ENCODE measurements at regions of chr15 and their contacts with region 1.

Region 1: DNA sequence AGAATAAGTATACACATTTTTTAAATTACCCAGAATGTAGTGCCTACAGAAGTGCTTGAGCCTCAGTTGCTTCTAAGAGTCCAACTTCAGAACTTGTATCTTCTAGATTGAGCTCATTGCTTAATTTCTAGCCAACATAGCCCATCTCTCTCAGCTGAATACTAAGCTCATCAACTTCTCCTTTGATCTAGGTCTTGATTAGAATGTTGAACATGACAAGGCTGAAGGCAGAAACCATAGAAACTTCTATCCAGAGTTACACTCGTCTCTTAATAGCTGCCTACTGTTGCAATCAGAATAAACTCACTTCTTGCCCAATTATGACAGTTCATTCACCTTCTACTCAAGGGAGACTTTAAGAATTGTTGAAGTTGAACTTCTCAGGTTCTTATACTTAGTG is 327.3 kb upstream of the THBS1 start:
- DNase-seq: no peak
- CTCF ChIP-seq: no peak

Region 2: GRCh38 chr15:39270934-39271333 is 17.4 kb after region 1 on chr15:
- CTCF ChIA-PET with region 1: interaction called, 10 read pairs
- POLR2A ChIA-PET with region 1: no interaction called
- DNase-seq: no peak
- CTCF ChIP-seq: no peak

Region 3: GRCh38 chr15:39594056-39594763 is 340.7 kb after region 1 on chr15:
- CTCF ChIA-PET with region 1: no interaction called
- POLR2A ChIA-PET with region 1: no interaction called
- DNase-seq: no peak
- CTCF ChIP-seq: peak; percentile 28

Measured in GM10248 (cell line).